Cardiac septum (tissue), 1 donor: ENCODE measurements at regions of chr18 and their contacts with region 1.

Region 1: DNA sequence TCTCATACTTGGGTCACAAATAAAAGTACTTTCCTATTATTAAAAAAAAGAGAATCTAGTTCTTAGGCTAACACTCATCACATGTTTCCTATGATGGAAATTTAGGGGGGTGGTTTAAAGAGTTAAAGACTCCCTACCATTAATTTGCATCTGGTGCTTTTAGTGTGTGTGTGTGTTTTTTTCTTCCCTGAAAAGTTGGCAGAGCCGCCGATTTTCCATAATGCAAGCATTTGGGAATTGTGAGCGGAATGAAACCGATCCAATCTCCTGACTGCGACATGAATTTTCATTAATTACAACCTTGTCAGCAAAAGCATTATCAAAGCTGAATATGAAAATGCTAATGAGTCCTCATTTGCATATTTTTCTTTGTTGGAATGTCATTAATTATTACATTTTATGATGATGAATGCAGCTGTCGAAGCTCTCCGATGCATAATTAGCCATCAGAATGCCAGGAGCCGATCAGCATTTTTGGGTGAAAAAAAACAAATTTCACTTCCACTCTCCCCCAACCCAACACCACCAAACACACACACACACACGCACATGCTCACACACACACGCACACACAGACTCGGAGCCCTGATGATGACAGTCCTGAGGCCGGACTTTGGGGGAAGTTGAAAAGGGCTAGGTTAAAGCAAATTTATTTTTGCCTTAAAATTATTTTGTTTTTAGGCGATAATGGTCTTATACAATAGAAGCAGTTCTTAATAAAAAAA is 165.4 kb downstream of the TCF4 start:
- DNase-seq: no peak

Region 2: DNA sequence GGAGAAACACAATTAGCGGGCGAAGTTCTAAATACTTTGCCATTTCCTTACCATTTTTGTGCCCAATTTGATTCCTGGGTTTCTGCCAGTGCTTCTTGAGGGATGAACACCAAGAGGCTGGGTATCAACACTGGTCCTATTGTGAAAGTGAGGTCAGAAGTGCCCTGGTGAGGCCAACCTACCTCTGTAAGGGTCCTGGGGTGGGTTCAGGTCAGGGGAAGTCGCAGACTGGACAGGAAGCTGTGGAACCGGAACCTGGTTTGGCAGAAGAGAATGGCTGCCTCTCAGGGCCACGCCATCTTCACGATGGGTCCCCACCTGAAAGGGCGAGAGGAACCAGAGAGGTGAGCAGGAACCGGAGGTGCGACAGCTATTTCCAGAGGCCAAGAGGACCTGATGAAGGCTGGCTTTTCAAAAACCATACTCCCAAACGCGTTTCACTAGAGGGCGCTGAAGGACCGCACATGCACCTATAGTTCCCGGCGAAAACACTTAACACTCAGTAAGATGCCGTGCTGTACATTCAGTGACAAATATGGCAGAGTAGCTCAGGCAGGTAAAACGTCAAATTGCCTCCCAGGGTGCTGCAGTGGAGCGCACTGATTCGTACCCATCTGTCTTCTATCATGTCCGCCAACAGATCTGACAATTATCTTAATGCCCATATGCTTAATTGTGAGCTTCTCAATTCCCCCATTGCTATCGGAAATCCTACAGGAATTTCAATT is 188.1 kb before region 1 on chr18:
- intact Hi-C with region 1: no loop called
- DNase-seq: peak; percentile 76

Region 3: DNA sequence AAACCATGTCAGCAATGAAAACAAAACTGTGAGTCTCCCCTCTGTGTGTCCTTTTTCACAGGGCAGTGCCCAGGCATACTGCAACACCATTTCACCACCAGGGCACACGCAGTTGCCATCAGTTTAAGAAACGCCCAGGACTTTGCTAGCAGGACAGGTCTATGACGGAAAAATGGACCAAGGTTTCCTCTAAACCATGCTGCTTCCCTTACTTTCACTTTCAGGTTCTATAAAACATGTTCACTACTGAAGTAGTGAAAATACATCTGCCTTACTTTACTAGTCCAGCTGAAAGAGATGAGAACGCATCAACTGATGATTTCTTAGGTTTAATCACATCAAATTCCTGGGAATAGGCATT is 54.9 kb after region 1 on chr18:
- intact Hi-C with region 1: loop called (anchors 5 kb)
- DNase-seq: no peak